Endothelial cell of umbilical vein (primary cell): ENCODE measurements at regions of chr5 and their contacts with region 1.

Region 1: DNA sequence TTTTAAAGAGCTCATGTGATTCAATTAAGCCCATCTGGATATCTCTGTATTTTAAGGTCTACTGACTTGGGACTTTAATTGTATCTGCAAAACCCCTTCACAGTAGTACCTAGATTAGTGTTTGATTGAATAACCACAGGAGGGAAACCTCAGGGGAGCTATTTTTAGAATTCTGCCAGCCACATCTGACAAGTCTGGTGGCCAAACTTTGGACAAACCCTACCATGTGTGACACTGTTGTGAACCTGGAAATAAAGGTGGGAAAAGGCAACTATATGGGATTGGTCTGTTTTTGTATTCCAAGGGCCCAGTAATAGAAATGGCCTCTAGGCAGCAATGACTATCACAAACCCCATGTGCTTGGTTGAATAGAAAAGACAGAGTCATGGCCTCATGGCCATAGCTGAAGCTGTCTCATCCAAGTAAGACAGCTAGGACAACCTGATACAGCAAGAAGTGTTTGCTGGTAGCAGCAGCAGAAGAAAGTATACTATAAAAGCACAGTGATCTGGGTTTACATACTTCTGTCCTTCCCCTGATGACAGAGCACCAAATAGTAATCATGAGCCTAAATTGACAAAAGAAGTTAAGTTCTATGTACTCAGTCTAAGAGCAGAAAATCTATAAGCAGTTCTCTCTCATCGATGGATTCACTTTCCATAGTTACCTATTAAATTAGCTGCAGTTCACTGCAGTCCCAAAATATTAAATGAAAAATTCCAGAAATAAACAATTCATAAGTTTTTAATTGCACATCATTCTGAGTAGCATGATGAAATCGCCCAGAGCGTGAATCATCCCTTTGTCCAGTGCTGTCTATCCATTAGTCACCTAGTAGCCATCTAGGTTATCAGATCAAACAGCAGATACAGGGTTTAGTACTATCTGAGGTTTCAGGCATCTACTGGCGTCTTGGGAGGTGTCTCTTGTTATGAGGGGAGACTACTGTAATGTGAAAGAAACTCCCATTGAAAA is 189.8 kb downstream of the ARHGAP26 start:
- DNase-seq: peak; percentile 36
- H3K4me3 ChIP-seq: no peak overlapping the region
- H3K27ac ChIP-seq: no peak overlapping the region
- H3K4me1 ChIP-seq: peaks cover 2% of the 10 kb centered on the region
- H3K27me3 ChIP-seq: no peaks in the 10 kb centered on the region
- CTCF ChIP-seq: no peak
- POLR2A ChIP-seq: no peak

Region 2: DNA sequence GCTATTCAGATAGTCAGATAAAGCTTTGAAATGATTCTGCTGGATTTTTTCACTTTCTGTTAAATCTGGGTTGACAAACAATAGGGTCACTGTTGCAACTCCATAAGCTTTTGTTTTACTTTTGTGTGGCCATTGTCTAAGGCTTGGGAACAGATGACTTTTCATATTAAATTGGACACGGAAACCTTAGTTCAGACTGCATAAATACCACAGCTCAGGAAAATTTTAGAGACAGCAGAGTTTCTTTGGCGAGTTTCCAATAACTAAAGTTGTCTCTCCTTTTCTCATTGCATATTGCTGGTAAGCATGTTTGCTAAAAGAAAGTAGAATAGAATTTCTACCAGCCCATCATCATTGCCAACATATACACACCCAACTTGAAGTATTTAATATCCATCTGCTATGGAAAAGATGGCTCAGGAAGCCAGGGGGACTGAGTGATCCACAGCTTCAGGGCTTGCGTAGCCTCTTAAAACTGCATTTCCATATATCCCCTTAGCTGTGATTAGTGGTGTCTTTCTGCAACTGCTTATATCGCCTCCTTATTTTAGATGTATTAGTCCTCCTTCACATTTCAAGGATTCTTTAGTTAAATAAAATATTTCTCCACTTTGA is 21.6 kb before region 1 on chr5:
- CTCF ChIA-PET with region 1: interaction called, 6 read pairs
- POLR2A ChIA-PET with region 1: no interaction called
- dilution Hi-C with region 1: no loop called
- intact Hi-C with region 1: loop called (anchors 2 kb)
- DNase-seq: peak; percentile 41
- H3K4me3 ChIP-seq: no peak overlapping the region
- H3K27ac ChIP-seq: no peak overlapping the region
- H3K4me1 ChIP-seq: peaks cover 22% of the 10 kb centered on the region
- H3K27me3 ChIP-seq: no peaks in the 10 kb centered on the region
- CTCF ChIP-seq: no peak
- POLR2A ChIP-seq: no peak